Right ventricle myocardium superior (tissue), 1 donor: ENCODE measurements at regions of chr3 and their contacts with region 1.

Region 1: GRCh38 chr3:25789596-25790556 is at the start of gene OXSM:
- DNase-seq: peak; percentile 94
- ATAC-seq: peak; percentile 98
- total RNA-seq, gene OXSM: 17.7 TPM

Region 2: DNA sequence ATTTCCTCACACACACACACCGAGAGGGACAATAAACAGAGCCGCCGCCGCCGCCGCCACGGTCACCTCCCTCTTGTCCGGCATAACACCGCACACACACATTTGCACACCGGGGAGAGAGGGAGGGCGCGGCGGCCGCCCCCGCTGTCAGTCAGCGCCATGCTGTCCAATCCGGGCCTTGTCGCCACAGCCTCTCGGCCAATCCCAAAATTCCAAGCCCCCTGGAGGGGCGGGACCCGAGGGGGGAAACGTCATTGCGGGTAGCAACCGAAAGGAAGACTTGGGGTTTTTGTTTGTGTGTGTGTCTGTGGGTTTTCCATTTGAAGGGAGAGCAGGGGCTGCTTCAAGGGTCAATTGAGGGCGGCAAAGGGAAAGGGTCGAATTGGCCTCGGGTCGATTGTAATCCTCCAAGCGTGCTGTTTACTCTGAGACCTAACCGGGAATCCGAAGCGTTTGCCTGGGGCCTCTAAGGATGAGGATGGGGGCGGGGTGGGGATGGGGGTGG is 125.0 kb before region 1 on chr3 and contains the start of gene TOP2B:
- intact Hi-C with region 1: loop called (anchors 5 kb)
- DNase-seq: peak; percentile 97
- ATAC-seq: peak; percentile 98
- total RNA-seq, gene TOP2B: 84.3 TPM

Region 3: GRCh38 chr3:26104851-26105251 is 315.0 kb after region 1 on chr3:
- intact Hi-C with region 1: no loop called
- DNase-seq: no peak
- ATAC-seq: peak; percentile 44